ENCODE measurements at regions of chr2 and their contacts with region 1.

Region 1: GRCh38 chr2:241877989-241878970 is 8.8 kb downstream of the RTP5 start:
- DNase-seq: no peak
- H3K4me3 ChIP-seq: no peak overlapping the region
- H3K27ac ChIP-seq: no peak overlapping the region
- H3K4me1 ChIP-seq: peaks cover 17 to 35% (median 29%) of the 10 kb centered on the region in 4 donors
- H3K27me3 ChIP-seq: peaks cover 0 to 12% (median 0%) of the 10 kb centered on the region in 4 donors
- CTCF ChIP-seq: peak; percentile 58 to 77 (median 66)
- EP300 ChIP-seq: no peak
- POLR2A ChIP-seq: no peak

Region 2: GRCh38 chr2:240851078-240851991 is 1026.9 kb before region 1 on chr2:
- intact Hi-C with region 1: loop called (anchors 5 kb)
- DNase-seq: peak; percentile 96
- H3K4me3 ChIP-seq: no peak overlapping the region
- H3K27ac ChIP-seq: no peak overlapping the region
- H3K4me1 ChIP-seq: no peaks in the 10 kb centered on the region
- H3K27me3 ChIP-seq: peaks cover 0 to 38% (median 2%) of the 10 kb centered on the region in 4 donors
- CTCF ChIP-seq: peak; percentile 80 to 100 (median 90)
- EP300 ChIP-seq: no peak
- POLR2A ChIP-seq: no peak

Region 3: DNA sequence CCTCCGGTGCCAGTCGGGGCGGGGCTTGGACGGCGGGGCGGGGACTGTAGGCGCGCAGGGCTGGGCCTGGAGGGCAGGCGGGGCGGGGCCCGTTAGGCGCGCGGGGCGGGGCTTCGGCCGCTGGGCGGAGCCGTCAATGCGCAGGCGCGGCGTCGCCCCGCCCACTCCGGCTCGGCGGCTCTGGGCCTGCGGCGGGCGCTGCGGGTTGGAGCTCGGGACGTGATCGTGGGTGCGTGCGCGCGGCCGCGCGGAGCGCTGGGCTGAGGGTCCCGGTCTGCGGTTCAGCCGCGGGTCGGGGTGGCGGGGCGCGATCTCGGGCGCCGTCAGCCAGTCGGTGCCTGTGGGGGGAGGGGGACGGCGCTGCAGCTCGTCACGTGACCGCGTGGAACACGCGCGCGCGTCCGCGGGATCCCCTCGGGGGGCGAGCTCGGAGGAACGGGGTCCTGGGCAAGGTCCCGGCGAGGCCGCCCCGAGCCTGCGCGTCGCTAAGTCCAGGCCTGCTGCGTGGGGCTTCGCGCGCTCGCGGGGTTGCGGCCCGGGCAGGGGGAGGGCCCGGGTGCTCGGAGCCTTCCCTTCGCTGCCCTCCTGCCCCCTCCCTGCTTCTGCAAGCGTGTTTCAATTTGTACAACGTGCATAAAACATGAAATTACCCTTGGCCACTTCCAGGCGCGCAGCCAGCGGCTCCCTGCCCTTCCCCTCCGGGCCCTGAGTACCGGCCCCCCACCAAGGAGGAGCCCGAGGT is 143.6 kb before region 1 on chr2 and contains the start of gene D2HGDH:
- intact Hi-C with region 1: loop called (anchors 10 kb)
- DNase-seq: peak; percentile 96
- H3K4me3 ChIP-seq: peak within 1 kb of the TSS; percentile 83 to 98 (median 94)
- H3K27ac ChIP-seq: peak within 1 kb of the TSS; percentile 88 to 95 (median 91)
- H3K4me1 ChIP-seq: peaks cover 12 to 21% (median 18%) of the 10 kb centered on the region in 4 donors
- H3K27me3 ChIP-seq: no peaks in the 10 kb centered on the region
- CTCF ChIP-seq: no peak
- EP300 ChIP-seq: no peak
- POLR2A ChIP-seq: no peak
- total RNA-seq, gene D2HGDH: 10.9 to 16.3 (median 11.9) TPM